ENCODE measurements at regions of chr4 and their contacts with region 1.

Region 1: GRCh38 chr4:48830706-48831531 is at the start of gene OCIAD1:
- DNase-seq: peak; percentile 97 to 99 (median 98)
- ATAC-seq: peak; percentile 97
- H3K4me3 ChIP-seq: peak within 1 kb of the TSS; percentile 74
- H3K27ac ChIP-seq: peak within 1 kb of the TSS; percentile 94
- H3K4me1 ChIP-seq: peaks cover 6% of the 10 kb centered on the region in 2 experiments; a peak in 3 of 5 replicates
- H3K27me3 ChIP-seq: no peaks in the 10 kb centered on the region
- CTCF ChIP-seq: no peak
- EP300 ChIP-seq: peak; percentile 11; the same call in 1 of the 2 replicates
- POLR2A ChIP-seq: peak; percentile 95
- RAD21 ChIP-seq: no peak; a peak in 1 of 4 replicates
- polyA plus RNA-seq, gene OCIAD1: 204 to 222 TPM

Region 2: DNA sequence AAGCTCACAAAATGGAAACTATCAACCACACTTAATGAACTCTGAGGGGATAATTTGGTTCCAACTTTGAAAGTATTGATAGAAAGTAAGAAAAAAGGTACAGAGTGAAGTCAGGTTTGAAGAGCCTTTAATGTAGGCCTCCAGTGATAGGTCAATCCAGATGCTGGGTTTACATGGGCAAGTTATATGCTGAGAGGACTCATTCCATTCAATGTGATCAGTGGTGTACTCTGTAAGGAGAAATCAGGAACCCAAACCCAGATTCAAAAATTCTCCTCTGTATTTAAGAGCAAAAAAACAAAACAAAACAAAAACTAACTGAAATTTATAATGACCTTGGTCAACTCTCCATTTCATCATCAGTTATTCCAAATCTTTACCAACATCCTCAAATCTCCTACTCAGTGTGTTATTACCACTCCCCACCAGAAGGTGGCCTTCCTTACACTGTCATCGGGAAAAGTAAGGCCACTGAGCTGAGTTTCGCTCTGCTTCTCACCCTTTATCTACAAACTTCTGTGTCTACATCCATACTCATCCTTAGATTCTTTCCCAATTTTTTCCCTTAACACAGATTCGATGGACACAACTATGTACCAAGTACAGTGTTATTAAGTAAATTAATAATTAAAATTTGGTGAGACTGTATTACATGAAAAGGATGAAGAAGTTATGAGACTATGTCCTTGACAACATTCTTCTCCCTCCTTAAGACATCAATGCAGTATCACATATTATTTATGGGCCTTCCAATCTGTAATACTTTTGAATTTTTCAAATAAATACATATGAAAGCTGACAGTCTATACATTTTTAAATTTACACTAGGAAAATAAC is 252.6 kb before region 1 on chr4:
- CTCF ChIA-PET with region 1: no interaction called
- POLR2A ChIA-PET with region 1: no interaction called
- in situ Hi-C with region 1: no loop called
- intact Hi-C with region 1: no loop called
- DNase-seq: peak; percentile 45 to 77 (median 58)
- ATAC-seq: peak; percentile 94
- H3K4me3 ChIP-seq: no peak overlapping the region
- H3K27ac ChIP-seq: no peak overlapping the region
- H3K4me1 ChIP-seq: no peaks in the 10 kb centered on the region
- H3K27me3 ChIP-seq: no peaks in the 10 kb centered on the region
- CTCF ChIP-seq: peak; percentile 76 to 84 (median 80)
- EP300 ChIP-seq: no peak
- POLR2A ChIP-seq: no peak
- RAD21 ChIP-seq: peak; percentile 91 to 96

Region 3: DNA sequence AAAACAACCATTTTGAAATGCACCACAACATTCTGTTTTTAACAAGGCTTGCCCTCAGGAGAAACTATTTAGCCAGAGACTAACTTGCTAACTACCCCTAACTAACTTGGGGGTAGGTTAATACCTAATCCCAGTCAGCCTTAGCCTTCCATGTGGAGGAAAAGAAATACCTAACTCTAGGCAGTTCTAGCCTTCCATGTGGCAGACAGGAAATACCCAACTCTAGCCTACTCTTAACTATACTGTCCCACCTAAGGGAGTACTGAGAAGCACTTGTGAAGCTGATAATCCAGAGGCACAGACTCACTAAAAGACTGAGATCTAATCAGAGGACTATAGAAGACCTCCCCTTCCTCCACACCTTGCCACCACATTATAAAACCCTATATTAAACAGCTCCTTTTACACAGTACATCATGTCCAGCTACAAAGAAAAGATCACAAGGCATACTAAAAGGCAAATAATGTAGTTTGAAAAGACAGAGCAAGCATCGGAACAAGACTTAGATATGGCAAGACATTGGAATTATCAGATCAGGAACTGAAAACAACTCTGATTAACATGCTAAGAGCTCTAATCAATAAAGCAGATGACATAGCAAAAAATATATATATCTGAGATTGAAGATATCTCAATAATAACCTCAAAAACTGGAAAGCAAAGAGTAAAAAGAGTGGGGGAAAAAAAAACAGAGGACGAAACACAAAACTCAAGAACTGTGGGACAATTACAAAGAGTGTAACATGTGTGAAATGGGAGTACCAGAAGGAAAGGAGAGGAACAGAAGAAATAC is 103.1 kb before region 1 on chr4:
- CTCF ChIA-PET with region 1: no interaction called
- POLR2A ChIA-PET with region 1: no interaction called
- in situ Hi-C with region 1: no loop called
- intact Hi-C with region 1: loop called (anchors 5 kb)
- DNase-seq: peak in 1 of 4 experiments; percentile 37
- ATAC-seq: peak; percentile 69
- H3K4me3 ChIP-seq: no peak overlapping the region
- H3K27ac ChIP-seq: peak overlapping the region; percentile 37; the same call in 2 of the 3 replicates
- H3K4me1 ChIP-seq: peaks cover 12 to 46% of the 10 kb centered on the region in 2 experiments; a peak in 3 of 5 replicates
- H3K27me3 ChIP-seq: no peaks in the 10 kb centered on the region
- CTCF ChIP-seq: no peak
- EP300 ChIP-seq: no peak
- POLR2A ChIP-seq: no peak
- RAD21 ChIP-seq: no peak

Region 4: GRCh38 chr4:48898733-48899431 is 68.0 kb after region 1 on chr4:
- CTCF ChIA-PET with region 1: no interaction called
- POLR2A ChIA-PET with region 1: no interaction called
- in situ Hi-C with region 1: no loop called
- intact Hi-C with region 1: loop called (anchors 5 kb)
- DNase-seq: peak in 2 of 4 experiments; percentile 53 to 70
- ATAC-seq: peak; percentile 89
- H3K4me3 ChIP-seq: 0 out of 2 replicates have a peak overlapping the region, but pooled peaks have one; percentile 4
- H3K27ac ChIP-seq: peak overlapping the region; percentile 65
- H3K4me1 ChIP-seq: peaks cover 0 to 17% of the 10 kb centered on the region in 2 experiments; a peak in 3 of 5 replicates
- H3K27me3 ChIP-seq: no peaks in the 10 kb centered on the region
- CTCF ChIP-seq: no peak
- EP300 ChIP-seq: peak; percentile 38; the same call in 1 of the 2 replicates
- POLR2A ChIP-seq: no peak
- RAD21 ChIP-seq: no peak

Region 5: GRCh38 chr4:48985976-48986653 is 155.2 kb after region 1 on chr4 and contains the start of gene CWH43:
- CTCF ChIA-PET with region 1: no interaction called
- POLR2A ChIA-PET with region 1: no interaction called
- in situ Hi-C with region 1: no loop called
- intact Hi-C with region 1: no loop called
- DNase-seq: no peak
- ATAC-seq: no peak
- H3K4me3 ChIP-seq: no peak within 1 kb of the TSS
- H3K27ac ChIP-seq: no peak within 1 kb of the TSS
- H3K4me1 ChIP-seq: peaks cover 0 to 12% of the 10 kb centered on the region in 2 experiments; a peak in 2 of 5 replicates
- H3K27me3 ChIP-seq: peaks cover 19 to 29% of the 10 kb centered on the region in 2 experiments; a peak in 4 of 5 replicates
- CTCF ChIP-seq: no peak
- EP300 ChIP-seq: no peak
- POLR2A ChIP-seq: no peak
- RAD21 ChIP-seq: no peak
- polyA plus RNA-seq, gene CWH43: not detected

Measured in K562 (cell line).